A549 (cell line): ENCODE measurements at regions of chr1 and their contacts with region 1.

Region 1: DNA sequence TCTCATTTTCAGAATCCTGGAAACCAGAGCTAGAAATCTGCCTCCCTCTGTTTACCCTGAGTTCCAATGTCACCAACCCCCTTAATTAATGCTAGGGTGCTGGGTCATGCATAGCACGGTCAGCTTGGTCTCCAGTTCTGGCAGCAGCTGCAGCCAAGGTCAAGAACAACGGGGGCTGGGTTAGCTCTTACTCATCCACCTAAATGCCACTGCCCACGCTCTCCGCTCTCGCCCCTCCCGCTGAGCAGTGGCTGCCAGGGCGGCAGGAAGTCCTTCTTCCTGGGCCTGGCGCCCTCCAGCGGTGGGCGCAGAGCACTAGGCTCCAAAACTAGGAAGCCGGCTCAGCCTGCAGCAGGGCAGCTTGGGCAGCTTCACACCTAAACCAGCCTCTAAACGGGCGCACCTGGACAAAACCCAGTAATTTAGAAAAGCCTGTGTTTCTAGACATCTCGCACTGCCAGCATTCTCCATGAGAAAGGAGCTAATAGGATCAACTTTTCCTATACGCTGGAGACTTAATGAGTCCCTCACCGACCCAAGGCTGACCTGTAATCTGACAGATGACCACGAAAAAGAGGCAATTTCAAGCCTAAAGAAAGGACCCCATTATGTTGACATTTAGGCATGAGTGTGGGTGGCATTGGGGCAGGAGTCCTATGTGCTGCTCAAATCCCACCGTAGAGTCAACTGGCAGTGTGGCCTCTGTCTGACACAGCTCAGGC is 78.3 kb upstream of the LRRN2 start:
- DNase-seq: peak; percentile 67 to 81
- ATAC-seq: peak; percentile 94 to 99
- H3K4me3 ChIP-seq: no peak overlapping the region
- H3K27ac ChIP-seq: peak overlapping the region; percentile 15 to 63; a peak in 3 of 6 replicates
- H3K4me1 ChIP-seq: peaks cover 10% of the 10 kb centered on the region; the same call in 2 of the 3 replicates
- CTCF ChIP-seq: peak; percentile 92
- EP300 ChIP-seq: no peak
- POLR2A ChIP-seq: no peak
- RAD21 ChIP-seq: peak; percentile 91 to 92

Region 2: DNA sequence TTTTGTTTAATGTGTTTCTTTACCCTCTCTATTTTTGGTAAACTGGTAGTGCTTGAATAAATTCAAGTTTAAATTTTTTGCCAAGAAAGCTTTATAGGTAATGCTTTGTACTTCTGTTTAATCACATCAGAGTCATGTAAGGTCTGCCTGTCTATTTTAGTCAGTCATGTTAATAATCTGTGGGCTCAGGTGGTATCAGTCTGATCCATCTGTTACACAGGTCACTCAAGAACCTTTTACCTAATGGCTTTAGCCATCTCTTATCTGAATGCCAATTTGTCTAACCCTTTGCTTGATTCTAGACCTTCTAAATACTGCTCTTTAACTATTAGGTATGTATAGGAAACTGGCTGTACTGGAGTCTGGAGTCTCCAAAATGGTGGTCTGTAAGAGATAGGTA is 231.0 kb before region 1 on chr1:
- CTCF ChIA-PET with region 1: no interaction called
- POLR2A ChIA-PET with region 1: no interaction called
- DNase-seq: no peak
- ATAC-seq: no peak
- H3K4me3 ChIP-seq: no peak overlapping the region
- H3K27ac ChIP-seq: no peak overlapping the region
- H3K4me1 ChIP-seq: no peaks in the 10 kb centered on the region
- CTCF ChIP-seq: no peak
- EP300 ChIP-seq: no peak
- POLR2A ChIP-seq: no peak
- RAD21 ChIP-seq: no peak

Region 3: DNA sequence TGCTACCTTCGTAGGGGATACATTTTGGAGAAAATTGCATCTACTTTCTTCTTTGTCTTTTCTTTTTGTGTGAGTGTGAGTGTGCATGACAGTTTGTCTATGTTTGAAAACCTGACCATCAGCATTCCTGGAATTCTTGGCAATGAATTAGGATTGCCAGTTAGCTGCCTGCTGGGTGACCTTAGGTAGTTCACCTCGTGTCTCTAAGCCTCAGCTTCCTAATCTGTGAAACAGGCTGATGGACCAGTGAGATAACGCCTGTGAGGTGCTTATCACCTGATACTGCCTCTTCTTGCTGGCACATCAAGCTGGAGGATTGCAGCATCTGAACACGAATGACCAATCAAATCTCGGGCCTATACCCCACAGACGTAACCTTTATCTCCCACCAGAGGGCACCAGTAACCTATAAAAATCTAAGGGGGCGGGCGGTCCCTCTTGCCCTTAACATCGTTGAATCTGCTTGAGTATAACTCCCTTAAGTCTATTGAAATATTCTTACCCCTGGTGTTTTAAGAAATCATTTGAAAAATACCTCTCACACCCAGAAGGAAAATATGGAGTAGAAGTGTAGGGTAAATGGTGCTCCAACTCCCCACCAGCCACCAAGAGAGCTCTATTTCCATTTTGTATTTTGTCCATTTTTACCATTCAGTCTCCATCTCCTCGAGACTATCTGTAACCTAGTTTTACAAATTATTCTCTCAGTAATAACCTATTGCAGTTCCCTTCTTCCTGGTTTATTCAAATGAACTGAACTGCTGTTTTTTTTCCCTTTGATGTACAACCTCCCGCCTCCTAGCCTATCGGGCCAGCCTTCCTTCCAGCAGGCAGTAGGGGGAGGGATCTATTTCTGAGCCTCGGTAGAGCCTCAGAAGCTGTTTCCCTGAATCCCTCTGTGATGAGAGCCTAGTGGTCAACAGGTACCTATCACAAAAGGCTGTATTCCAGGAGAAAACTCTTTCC is 198.0 kb before region 1 on chr1:
- CTCF ChIA-PET with region 1: interaction called, 216 read pairs
- POLR2A ChIA-PET with region 1: no interaction called
- DNase-seq: peak; percentile 82 to 89
- ATAC-seq: peak; percentile 79 to 93
- H3K4me3 ChIP-seq: no peak overlapping the region
- H3K27ac ChIP-seq: no peak overlapping the region
- H3K4me1 ChIP-seq: peaks cover 9% of the 10 kb centered on the region; the same call in 2 of the 3 replicates
- CTCF ChIP-seq: peak; percentile 87
- EP300 ChIP-seq: no peak
- POLR2A ChIP-seq: no peak
- RAD21 ChIP-seq: peak; percentile 93 to 95

Region 4: GRCh38 chr1:204623894-204624361 is 139.9 kb before region 1 on chr1:
- CTCF ChIA-PET with region 1: interaction called, 12 read pairs
- POLR2A ChIA-PET with region 1: no interaction called
- DNase-seq: peak; percentile 48 to 53
- ATAC-seq: peak; percentile 86 to 87
- H3K4me3 ChIP-seq: no peak overlapping the region
- H3K27ac ChIP-seq: peak overlapping the region in 1 of 2 experiments; percentile 42; a peak in 2 of 6 replicates
- H3K4me1 ChIP-seq: peaks cover 50% of the 10 kb centered on the region
- CTCF ChIP-seq: no peak
- EP300 ChIP-seq: no peak
- POLR2A ChIP-seq: no peak
- RAD21 ChIP-seq: peak in 1 of 2 experiments; percentile 12; a peak in 1 of 5 replicates

Region 5: GRCh38 chr1:204685236-204686006 is 78.4 kb before region 1 on chr1 and contains the start of gene LRRN2:
- CTCF ChIA-PET with region 1: interaction called, 28 read pairs
- POLR2A ChIA-PET with region 1: interaction called, 3 read pairs
- DNase-seq: peak; percentile 28 to 60
- ATAC-seq: peak; percentile 69
- H3K4me3 ChIP-seq: peak within 1 kb of the TSS; percentile 65
- H3K27ac ChIP-seq: peak within 1 kb of the TSS; percentile 82 to 98
- H3K4me1 ChIP-seq: peaks cover 14% of the 10 kb centered on the region
- CTCF ChIP-seq: no peak
- EP300 ChIP-seq: no peak
- POLR2A ChIP-seq: no peak; the same call in none of the 2 replicates
- RAD21 ChIP-seq: no peak
- polyA plus RNA-seq, gene LRRN2: 3.6 and 4.3 TPM in 2 replicates

Region 6: GRCh38 chr1:204697893-204698292 is 66.0 kb before region 1 on chr1:
- CTCF ChIA-PET with region 1: interaction called, 35 read pairs
- POLR2A ChIA-PET with region 1: no interaction called
- DNase-seq: no peak
- ATAC-seq: no peak
- H3K4me3 ChIP-seq: no peak overlapping the region
- H3K27ac ChIP-seq: no peak overlapping the region
- H3K4me1 ChIP-seq: no peaks in the 10 kb centered on the region
- CTCF ChIP-seq: no peak
- EP300 ChIP-seq: no peak
- POLR2A ChIP-seq: no peak
- RAD21 ChIP-seq: no peak

Region 7: DNA sequence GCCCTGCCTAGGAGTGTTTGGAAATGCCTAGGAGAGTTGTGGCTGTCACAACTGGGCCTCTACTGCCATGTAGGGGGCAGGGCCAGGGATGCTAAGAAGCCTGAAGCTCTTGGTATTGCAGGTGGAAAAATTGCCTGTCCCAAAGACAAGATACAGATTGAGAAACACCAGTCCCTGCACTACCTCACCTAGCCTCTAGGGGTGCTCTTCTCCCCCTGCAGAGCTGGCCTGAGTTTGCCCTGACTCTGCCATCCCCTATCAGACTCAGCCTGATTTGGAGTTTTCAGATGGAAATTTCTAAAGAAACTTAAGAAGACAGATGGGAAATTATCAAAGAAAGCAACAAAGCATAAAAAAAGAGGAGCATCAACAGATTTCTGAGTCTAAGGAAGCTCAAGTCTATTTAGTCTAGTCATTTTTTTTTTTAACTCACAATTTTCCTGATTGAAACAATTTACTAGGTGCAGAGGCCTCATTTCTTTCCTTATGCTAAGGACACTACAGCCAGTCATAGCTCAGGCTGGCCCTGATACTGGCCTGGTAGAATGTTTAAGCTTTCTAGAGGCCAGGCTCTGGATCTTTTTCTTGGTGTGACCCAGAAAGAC is 16.9 kb before region 1 on chr1:
- CTCF ChIA-PET with region 1: interaction called, 81 read pairs
- POLR2A ChIA-PET with region 1: interaction called, 4 read pairs
- DNase-seq: peak; percentile 50 to 67
- ATAC-seq: peak; percentile 81 to 89
- H3K4me3 ChIP-seq: no peak overlapping the region
- H3K27ac ChIP-seq: no peak overlapping the region
- H3K4me1 ChIP-seq: peaks cover 10% of the 10 kb centered on the region
- CTCF ChIP-seq: peak; percentile 76
- EP300 ChIP-seq: no peak
- POLR2A ChIP-seq: no peak
- RAD21 ChIP-seq: peak; percentile 42 to 51; a peak in 4 of 5 replicates

Region 8: GRCh38 chr1:204782118-204782700 is 18.3 kb after region 1 on chr1:
- CTCF ChIA-PET with region 1: interaction called, 18 read pairs
- POLR2A ChIA-PET with region 1: no interaction called
- DNase-seq: no peak
- ATAC-seq: no peak
- H3K4me3 ChIP-seq: no peak overlapping the region
- H3K27ac ChIP-seq: no peak overlapping the region
- H3K4me1 ChIP-seq: no peaks in the 10 kb centered on the region
- CTCF ChIP-seq: no peak
- EP300 ChIP-seq: no peak
- POLR2A ChIP-seq: no peak
- RAD21 ChIP-seq: no peak

Region 9: GRCh38 chr1:204837440-204838084 is 73.7 kb after region 1 on chr1:
- CTCF ChIA-PET with region 1: no interaction called
- POLR2A ChIA-PET with region 1: no interaction called
- DNase-seq: peak; percentile 45 to 58
- ATAC-seq: peak; percentile 72 to 81
- H3K4me3 ChIP-seq: no peak overlapping the region
- H3K27ac ChIP-seq: no peak overlapping the region
- H3K4me1 ChIP-seq: no peaks in the 10 kb centered on the region
- CTCF ChIP-seq: no peak
- EP300 ChIP-seq: no peak
- POLR2A ChIP-seq: no peak
- RAD21 ChIP-seq: no peak

Region 10: DNA sequence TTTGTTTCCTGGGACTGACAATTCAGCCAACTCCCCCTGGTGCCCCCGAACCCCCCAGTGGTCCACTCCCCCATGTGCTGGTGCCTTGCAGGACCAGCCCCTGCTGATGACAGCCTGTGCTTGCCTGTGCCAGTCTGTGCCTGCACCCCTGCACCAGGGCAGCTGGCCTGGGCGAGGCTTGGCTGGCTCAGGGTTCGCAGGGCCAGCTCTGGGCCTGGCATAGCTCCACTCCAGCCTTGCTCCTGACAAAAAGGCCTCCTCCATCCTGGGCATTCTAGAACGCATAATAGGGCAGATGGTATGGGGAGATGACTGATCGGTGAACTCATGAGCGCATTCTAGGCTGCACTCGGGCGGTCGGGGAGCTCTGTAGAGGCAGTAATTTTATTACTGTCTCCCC is 284.5 kb after region 1 on chr1:
- CTCF ChIA-PET with region 1: no interaction called
- POLR2A ChIA-PET with region 1: no interaction called
- DNase-seq: no peak
- ATAC-seq: no peak
- H3K4me3 ChIP-seq: no peak overlapping the region
- H3K27ac ChIP-seq: no peak overlapping the region
- H3K4me1 ChIP-seq: peaks cover under 1% of the 10 kb centered on the region; the same call in 1 of the 3 replicates
- CTCF ChIP-seq: no peak
- EP300 ChIP-seq: no peak
- POLR2A ChIP-seq: no peak
- RAD21 ChIP-seq: no peak